Colonic mucosa (tissue), 4 donors: ENCODE measurements at regions of chr7 and their contacts with region 1.

Region 1: GRCh38 chr7:12524794-12525386 is 45.6 kb upstream of the SCIN start:
- DNase-seq: no peak
- H3K4me3 ChIP-seq: no peak overlapping the region
- H3K27ac ChIP-seq: no peak overlapping the region
- H3K4me1 ChIP-seq: no peaks in the 10 kb centered on the region
- H3K27me3 ChIP-seq: no peaks in the 10 kb centered on the region
- CTCF ChIP-seq: peak; percentile 54

Region 2: DNA sequence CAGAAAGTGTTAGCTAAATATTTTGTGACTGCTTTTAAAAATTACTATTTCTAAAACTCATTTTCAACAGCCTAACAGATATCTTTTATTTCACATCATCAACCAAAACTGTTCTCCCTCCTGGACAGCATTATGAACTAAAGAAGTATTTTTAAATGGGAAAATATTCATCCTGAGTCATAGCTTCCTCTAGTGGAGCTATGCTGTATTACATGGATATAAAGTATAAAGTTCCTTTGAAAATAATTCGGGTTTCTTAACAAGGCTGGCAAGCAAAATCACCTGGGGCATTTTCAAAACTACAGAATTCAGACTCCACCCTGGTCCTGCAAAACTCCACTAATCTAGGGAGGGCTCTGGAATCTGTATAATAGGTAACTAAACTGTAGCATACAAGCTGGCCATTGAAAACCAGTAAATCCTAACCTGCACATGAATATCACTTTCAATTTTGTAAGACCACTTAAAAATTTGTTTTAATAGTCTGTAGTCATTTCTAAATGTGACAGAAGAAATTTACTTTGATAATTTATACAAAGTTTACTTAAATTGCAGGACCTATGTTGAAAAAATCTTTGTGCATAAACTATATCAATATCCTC is 99.1 kb after region 1 on chr7:
- intact Hi-C with region 1: loop called (anchors 2 kb)
- DNase-seq: no peak
- H3K4me3 ChIP-seq: no peak overlapping the region
- H3K27ac ChIP-seq: no peak overlapping the region
- H3K4me1 ChIP-seq: no peaks in the 10 kb centered on the region
- H3K27me3 ChIP-seq: no peaks in the 10 kb centered on the region
- CTCF ChIP-seq: peak; percentile 72

Region 3: DNA sequence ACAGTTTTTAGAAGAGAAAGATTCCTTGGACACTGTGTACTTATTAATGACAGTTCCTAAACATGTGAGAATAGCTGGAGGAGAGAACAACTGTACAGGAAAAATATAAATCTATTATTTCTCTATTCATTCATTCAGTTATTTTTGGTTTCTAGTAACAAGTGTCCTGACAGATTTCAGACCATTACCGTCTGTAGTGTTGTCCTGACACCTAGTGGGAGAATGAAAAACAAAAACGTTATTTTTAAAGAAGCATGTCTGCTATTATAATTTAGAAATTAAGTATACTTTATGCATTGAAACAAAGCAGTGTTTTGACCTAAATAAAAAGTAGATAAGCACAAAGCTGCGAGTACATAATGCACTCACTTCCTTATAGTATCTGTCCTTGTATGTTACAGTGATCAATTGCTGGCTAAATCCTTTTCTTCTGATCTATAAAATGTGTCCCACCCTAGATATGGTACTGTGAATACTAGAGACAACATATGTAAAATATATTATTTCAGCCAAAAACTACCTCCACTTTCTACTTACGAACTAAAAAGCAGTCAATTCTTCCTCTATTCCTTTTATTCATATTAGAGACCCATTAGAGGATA is 738.1 kb after region 1 on chr7:
- intact Hi-C with region 1: loop called (anchors 10 kb)
- DNase-seq: no peak
- H3K4me3 ChIP-seq: no peak overlapping the region
- H3K27ac ChIP-seq: no peak overlapping the region
- H3K4me1 ChIP-seq: no peaks in the 10 kb centered on the region
- H3K27me3 ChIP-seq: no peaks in the 10 kb centered on the region
- CTCF ChIP-seq: no peak